ENCODE measurements at regions of chr7 and their contacts with region 1.

Region 1: GRCh38 chr7:16062269-16062668 is 359.1 kb downstream of the CRPPA start:
- DNase-seq: no peak
- ATAC-seq: peak; percentile 61

Region 2: GRCh38 chr7:15839416-15840100 is 222.7 kb before region 1 on chr7:
- intact Hi-C with region 1: loop called (anchors 10 kb)
- DNase-seq: peak; percentile 85
- ATAC-seq: peak; percentile 96

Region 3: DNA sequence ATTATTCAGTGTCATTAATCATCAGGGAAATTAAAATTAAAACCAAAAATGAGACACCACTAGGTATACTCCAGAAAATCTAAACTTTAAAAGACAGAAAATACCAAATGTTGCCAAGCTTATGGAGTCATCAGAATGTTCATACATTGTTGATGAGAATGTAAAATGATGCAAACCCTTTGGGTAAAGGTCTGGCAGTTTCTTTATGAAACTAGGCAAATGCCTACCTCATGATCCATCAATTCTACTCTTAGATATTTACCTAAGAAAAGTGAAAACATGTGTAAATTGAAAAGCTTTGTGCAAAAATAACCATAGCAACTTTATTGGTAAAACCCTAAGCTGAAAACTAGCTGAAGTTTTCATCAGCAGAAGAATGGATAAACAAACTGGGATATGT is 46.3 kb before region 1 on chr7:
- intact Hi-C with region 1: no loop called
- DNase-seq: no peak
- ATAC-seq: no peak

Measured in Right ventricle myocardium superior (tissue), 1 donor.